Right ventricle myocardium superior (tissue), 1 donor: ENCODE measurements at regions of chr1 and their contacts with region 1.

Region 1: DNA sequence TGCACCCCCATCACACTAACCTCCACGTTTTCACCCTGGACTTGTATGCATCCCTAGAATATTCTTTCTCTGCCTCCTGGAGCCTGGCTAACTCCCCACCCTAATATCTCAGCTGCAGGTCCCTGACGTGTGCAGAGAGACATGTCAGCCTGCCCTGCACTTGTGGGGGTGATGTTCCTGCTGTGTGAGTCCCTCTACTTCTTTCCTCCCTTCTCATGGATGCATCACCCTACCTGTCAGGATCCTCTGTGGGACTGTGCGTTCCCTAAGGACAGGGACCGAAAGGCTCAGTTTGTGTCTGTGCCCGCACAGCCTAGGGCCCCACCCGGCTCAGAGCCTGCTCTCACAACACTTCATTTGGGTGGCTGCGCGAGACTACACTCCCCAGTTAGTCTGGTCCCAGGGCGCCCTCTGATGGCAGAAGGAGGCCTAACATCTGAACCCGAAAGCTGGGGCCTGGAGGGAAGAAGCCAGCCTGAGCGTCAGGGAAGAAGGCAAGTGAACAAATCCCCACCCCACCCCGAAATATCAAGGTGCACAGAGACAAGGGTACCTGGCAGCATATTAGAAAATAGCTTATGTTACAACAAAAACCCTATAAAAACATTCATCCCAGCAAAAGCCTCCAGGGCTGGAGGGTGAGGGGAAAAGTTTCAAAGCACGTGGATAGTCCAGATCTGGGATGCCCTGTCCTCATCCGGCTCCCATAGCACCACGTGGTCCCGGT is 3.7 kb downstream of the CD52 start:
- DNase-seq: peak; percentile 96
- ATAC-seq: peak; percentile 94

Region 2: GRCh38 chr1:26102526-26102925 is 219.0 kb before region 1 on chr1:
- intact Hi-C with region 1: loop called (anchors 10 kb)
- DNase-seq: no peak
- ATAC-seq: no peak

Region 3: DNA sequence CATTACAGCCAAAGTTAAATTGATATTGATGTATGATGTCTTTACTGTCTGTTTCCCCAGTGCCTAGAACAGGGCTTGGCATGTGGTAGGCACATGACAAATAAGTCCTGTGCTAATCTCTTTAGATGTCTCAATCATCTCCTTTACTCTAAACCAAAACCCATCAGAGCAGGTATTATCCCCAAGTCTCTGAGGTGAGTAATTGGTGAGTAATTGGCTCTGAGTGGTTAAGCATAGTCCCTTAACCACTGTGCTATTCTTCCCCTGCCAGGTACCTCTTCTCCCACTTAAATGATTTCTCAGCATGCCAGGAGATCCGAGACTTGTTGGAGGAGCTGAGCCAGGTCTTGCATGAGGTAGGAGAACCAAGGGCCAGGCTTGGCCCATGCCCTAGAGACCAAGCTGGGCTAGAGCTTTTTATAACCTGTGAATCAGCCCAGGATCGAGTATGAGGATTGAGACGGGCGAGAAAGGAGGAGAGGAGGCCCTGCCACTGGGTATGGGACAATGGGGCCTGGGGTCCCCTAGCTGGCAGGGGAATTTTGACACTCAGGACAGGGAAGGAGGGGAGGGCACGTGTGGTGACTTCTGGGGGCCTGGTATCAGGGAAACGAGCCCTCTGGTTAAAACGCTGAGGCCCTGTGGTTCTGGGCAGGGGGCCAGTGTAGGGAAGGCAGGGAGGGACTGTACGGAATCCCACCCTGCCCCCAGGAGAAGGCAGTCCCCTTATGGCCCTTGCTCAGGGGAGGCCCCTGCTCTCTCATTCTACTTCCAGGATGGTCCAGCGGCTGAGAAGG is 139.7 kb before region 1 on chr1:
- intact Hi-C with region 1: loop called (anchors 10 kb)
- DNase-seq: no peak
- ATAC-seq: no peak

Region 4: DNA sequence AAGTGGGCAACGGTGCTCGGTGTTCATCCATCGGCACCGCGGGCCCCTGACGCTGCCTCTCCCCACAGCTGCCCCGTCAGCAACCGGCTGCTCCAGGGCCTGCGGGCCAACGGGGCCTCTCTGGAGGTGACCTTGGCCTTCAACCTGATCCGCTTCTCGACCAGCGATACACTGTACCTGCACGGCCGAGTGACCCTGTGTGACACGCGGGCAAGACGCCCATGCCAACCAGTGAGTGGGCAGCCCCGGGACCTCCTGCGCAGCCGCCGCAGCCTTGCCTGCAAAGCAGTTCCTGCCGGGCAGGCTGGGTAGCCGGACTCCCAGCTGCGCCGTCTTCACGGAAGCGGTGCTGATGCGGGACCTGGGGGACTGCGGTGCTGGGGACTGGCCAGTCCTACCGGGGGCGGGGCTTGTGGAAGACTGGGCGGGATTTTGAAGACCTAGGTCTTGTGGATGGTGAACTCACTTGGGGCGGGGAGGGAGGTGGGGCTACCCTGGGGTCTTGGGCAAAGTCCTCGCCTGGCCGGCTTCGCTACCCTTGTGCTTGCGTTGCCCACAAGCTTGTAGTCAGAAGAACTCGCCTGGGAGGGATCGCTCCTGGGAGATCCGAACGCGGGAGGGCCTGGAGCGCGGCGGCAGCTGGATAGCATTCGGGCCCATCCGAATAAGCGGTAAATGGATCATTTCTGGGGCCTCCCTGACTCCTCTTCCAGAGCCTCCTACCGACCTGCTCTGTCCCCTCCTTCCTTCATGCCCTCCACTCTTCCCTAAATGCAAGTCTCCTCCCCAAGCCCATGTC is 96.2 kb before region 1 on chr1:
- intact Hi-C with region 1: no loop called
- DNase-seq: peak; percentile 82
- ATAC-seq: peak; percentile 92

Region 5: DNA sequence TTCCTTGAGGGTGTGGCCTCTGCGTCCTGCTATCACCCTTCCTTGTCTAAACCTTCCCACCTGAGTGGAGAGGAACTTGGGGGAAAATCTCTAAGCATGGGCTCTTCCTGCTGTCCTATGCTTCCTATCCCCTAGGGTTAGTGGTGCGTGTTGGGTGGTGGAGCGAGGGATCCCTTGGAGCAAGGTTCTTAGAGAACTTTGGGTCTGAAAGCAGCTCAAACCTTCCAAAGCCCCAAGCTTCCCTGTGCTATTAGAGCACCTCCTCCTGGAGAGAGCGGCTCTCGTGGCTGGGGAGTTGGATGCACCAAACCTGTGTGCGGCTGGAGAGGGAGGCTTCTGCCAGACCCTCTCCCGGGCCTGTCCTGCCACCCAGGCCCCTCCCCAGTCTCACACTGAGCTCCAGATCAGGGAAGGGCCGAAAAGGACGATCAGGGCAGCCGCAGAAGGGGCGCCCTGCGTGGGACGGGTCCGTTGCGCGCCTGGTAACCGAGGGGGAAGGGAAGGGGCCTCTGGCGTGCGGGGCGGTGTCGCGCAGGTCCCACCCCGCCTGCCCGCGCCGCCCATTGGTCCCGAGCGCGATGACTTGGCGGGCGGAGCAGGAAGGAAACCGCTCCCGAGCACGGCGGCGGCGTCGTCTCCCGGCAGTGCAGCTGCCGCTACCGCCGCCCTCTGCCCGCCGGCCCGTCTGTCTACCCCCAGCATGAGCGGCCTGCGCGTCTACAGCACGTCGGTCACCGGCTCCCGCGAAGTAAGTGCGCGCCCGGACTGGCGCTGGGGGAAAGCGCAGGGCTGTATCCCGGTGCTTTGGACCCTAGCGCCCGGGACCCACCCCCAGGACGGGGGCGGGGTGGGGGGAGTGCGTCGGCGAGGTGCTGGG is 41.8 kb before region 1 on chr1 and contains the start of gene SH3BGRL3:
- intact Hi-C with region 1: loop called (anchors 1 kb)
- DNase-seq: peak; percentile 95
- ATAC-seq: peak; percentile 82
- total RNA-seq, gene SH3BGRL3: 33.9 TPM